SK-N-SH (cell line): ENCODE measurements at regions of chr3 and their contacts with region 1.

Region 1: DNA sequence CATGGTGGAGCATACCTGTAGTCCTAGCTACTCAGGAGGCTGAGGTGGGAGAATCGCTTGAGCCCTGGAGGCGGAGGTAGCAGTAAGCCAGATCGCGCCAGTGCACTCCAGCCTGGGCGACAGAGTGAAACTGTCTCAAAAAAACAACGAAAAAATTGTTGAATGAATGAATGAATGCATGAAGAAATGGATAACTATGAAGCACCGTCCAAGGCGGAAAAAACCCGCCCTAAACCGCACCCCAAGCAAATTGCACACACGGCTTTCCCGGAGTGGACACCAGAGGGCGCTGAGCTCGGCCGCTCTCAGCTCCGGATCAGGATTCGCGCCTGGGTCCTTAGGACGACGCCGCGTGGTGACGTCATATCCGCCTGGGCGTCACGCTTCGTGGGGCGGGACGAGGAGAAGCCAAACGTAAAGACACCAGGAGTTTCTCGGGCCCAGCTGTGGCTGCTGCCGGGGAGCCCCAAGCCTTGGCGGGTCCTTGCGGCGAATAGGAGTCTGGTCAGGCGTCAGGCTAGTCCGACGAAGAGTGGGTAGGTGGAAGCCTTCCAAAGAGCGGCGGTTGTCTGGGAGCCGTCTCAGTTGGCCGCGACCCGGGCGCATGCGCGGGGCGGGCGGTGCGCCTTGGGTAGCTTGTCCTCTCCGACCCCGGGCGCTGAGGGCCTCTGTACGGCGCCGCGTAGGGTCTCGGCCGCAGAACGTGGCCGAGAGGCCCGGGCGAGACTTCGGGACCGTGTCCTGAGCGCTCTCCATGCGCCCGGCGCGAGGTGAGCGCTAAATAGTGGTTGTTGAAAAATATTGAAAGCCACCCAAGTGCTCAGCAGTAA is at the starts of genes HTD2 and RPP14:
- DNase-seq: peak; percentile 95
- H3K4me3 ChIP-seq: peak within 1 kb of the TSS; percentile 76 to 94
- H3K27ac ChIP-seq: peak within 1 kb of the TSS; percentile 93 to 94
- H3K4me1 ChIP-seq: peaks cover 8 to 14% of the 10 kb centered on the region in 2 experiments; a peak in 3 of 4 replicates
- H3K27me3 ChIP-seq: no peaks in the 10 kb centered on the region; the same call in 1 of the 2 replicates
- CTCF ChIP-seq: peak; percentile 95
- EP300 ChIP-seq: no peak; a peak in 1 of 4 replicates
- RAD21 ChIP-seq: peak; percentile 38
- polyA plus RNA-seq, gene HTD2: 3.0 and 5.2 TPM in 2 replicates
- polyA plus RNA-seq, gene RPP14: 8.3 and 9.7 TPM in 2 replicates

Region 2: GRCh38 chr3:58188173-58188564 is 117.9 kb before region 1 on chr3:
- CTCF ChIA-PET with region 1: interaction called, 45 read pairs
- POLR2A ChIA-PET with region 1: no interaction called
- DNase-seq: no peak
- H3K4me3 ChIP-seq: no peak overlapping the region
- H3K27ac ChIP-seq: no peak overlapping the region
- H3K4me1 ChIP-seq: no peaks in the 10 kb centered on the region
- H3K27me3 ChIP-seq: no peaks in the 10 kb centered on the region
- CTCF ChIP-seq: no peak
- EP300 ChIP-seq: no peak
- RAD21 ChIP-seq: no peak

Region 3: GRCh38 chr3:58324391-58325390 is 18.6 kb after region 1 on chr3:
- CTCF ChIA-PET with region 1: interaction called, 25 read pairs
- POLR2A ChIA-PET with region 1: interaction called, 3 read pairs
- DNase-seq: no peak
- H3K4me3 ChIP-seq: no peak overlapping the region
- H3K27ac ChIP-seq: peak overlapping the region in 1 of 2 experiments; percentile 3; a peak in 1 of 4 replicates
- H3K4me1 ChIP-seq: peaks cover 0 to 8% of the 10 kb centered on the region in 2 experiments; a peak in 1 of 4 replicates
- H3K27me3 ChIP-seq: no peaks in the 10 kb centered on the region
- CTCF ChIP-seq: no peak
- EP300 ChIP-seq: no peak
- RAD21 ChIP-seq: no peak

Region 4: GRCh38 chr3:58349792-58350626 is 43.9 kb after region 1 on chr3:
- CTCF ChIA-PET with region 1: interaction called, 10 read pairs
- POLR2A ChIA-PET with region 1: no interaction called
- DNase-seq: no peak
- H3K4me3 ChIP-seq: no peak overlapping the region
- H3K27ac ChIP-seq: no peak overlapping the region
- H3K4me1 ChIP-seq: peaks cover 0 to 4% of the 10 kb centered on the region in 2 experiments; a peak in 1 of 4 replicates
- H3K27me3 ChIP-seq: no peaks in the 10 kb centered on the region
- CTCF ChIP-seq: no peak
- EP300 ChIP-seq: no peak
- RAD21 ChIP-seq: no peak

Region 5: GRCh38 chr3:58414538-58415197 is 108.6 kb after region 1 on chr3:
- CTCF ChIA-PET with region 1: interaction called, 30 read pairs
- POLR2A ChIA-PET with region 1: interaction called, 3 read pairs
- DNase-seq: peak; percentile 66
- H3K4me3 ChIP-seq: no peak overlapping the region
- H3K27ac ChIP-seq: peak overlapping the region in 1 of 2 experiments; percentile 5; a peak in 1 of 4 replicates
- H3K4me1 ChIP-seq: peaks cover 0 to under 1% of the 10 kb centered on the region in 2 experiments; a peak in 1 of 4 replicates
- H3K27me3 ChIP-seq: no peaks in the 10 kb centered on the region
- CTCF ChIP-seq: peak; percentile 85
- EP300 ChIP-seq: no peak
- RAD21 ChIP-seq: peak; percentile 75

Region 6: DNA sequence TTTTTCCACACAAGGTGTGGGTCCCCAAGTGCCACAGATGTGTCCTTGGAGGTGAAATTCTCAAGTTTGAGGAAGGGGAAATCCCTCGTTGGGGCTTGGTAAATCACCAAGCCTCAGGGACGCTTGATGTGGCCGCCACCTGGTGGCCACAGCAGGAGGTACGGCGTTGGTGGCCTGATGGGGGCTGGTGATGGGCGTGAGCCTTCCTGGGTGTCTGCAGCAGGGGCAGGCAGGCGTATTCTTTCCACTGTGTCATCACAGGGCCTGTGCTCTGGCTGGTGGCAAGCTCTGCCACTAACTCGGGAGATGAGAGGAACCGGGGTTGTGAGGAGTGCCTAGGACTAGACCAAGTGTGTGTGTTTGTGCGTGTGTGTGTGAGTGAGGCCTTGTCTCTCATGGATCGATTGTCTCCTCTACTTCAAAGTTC is 226.7 kb after region 1 on chr3:
- CTCF ChIA-PET with region 1: interaction called, 16 read pairs
- POLR2A ChIA-PET with region 1: no interaction called
- DNase-seq: peak; percentile 89
- H3K4me3 ChIP-seq: peak overlapping the region in 1 of 2 experiments; percentile 17; a peak in 1 of 4 replicates
- H3K27ac ChIP-seq: no peak overlapping the region
- H3K4me1 ChIP-seq: peaks cover 12 to 32% of the 10 kb centered on the region in 2 experiments
- H3K27me3 ChIP-seq: no peaks in the 10 kb centered on the region
- CTCF ChIP-seq: peak; percentile 90
- EP300 ChIP-seq: no peak
- RAD21 ChIP-seq: peak; percentile 92

Region 7: GRCh38 chr3:58679974-58680666 is 374.0 kb after region 1 on chr3:
- CTCF ChIA-PET with region 1: no interaction called
- POLR2A ChIA-PET with region 1: no interaction called
- DNase-seq: no peak
- H3K4me3 ChIP-seq: no peak overlapping the region
- H3K27ac ChIP-seq: no peak overlapping the region
- H3K4me1 ChIP-seq: no peaks in the 10 kb centered on the region
- H3K27me3 ChIP-seq: no peaks in the 10 kb centered on the region; the same call in 1 of the 2 replicates
- CTCF ChIP-seq: no peak
- EP300 ChIP-seq: no peak
- RAD21 ChIP-seq: no peak